Mammary epithelial cell (primary cell): ENCODE measurements at regions of chr2 and their contacts with region 1.

Region 1: DNA sequence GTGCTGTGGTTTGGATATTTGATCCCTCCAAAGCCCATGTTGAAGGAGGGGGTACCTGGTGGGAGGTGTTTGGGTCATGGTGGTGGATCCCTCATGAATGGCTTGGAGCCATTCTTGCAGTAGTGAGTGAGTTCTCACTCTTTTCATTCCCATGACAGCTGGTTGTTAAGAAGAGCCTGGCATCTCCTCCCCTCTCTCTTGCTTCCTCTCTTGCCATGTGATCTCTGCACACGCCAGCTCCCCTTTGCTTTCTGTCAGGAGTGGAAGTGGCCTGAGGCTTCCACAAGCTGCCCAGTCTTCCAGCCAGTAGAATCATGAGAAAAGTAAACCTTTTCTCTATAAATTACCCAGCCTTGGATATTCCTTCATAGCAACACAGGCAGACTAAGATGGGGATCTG is 8.6 kb downstream of the ADD2 start:
- DNase-seq: no peak
- H3K4me3 ChIP-seq: no peak overlapping the region
- H3K27ac ChIP-seq: no peak overlapping the region
- H3K4me1 ChIP-seq: no peaks in the 10 kb centered on the region
- H3K27me3 ChIP-seq: no peaks in the 10 kb centered on the region
- CTCF ChIP-seq: no peak

Region 2: DNA sequence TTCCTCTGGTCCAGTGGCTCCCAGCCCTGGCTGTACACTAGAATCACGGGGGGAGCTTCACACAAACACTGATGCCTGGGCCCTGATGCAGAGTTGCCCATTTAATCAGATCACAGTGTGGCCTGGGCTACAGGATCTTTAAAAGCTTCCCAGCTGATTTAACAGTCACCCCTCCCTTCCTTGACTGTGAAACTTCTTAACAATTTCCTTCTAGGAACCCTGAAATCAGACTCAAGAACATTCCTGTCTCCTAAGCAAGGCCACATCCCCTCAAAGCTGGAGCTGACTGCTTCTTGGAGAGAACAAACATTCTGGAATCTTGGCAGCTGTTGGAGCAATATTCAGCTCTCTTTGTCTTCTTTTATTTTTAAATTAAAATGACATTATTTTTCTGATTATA is 80.2 kb before region 1 on chr2:
- CTCF ChIA-PET with region 1: no interaction called
- dilution Hi-C with region 1: loop called (anchors 5 kb)
- in situ Hi-C with region 1: no loop called
- intact Hi-C with region 1: no loop called
- DNase-seq: no peak
- H3K4me3 ChIP-seq: no peak overlapping the region
- H3K27ac ChIP-seq: no peak overlapping the region
- H3K4me1 ChIP-seq: no peaks in the 10 kb centered on the region
- H3K27me3 ChIP-seq: no peaks in the 10 kb centered on the region
- CTCF ChIP-seq: no peak

Region 3: DNA sequence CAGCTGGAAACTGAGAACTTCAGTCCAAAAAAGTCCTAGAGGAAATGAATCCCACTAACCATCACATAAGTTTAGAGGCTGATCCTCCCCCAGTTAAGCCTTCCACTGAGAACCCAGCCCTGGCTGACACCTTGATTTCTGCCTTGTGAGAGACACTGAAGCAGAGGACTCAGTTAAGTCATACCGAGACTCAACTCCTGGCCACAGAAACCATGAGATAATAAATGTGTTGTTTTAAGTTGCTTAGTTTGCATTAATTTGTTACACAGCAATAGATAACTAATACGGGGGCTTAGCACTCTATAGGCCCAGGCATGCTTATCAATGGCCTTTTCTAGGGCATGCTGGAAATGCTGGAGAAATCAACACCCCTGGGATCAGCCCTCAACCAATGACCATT is 12.0 kb after region 1 on chr2:
- CTCF ChIA-PET with region 1: no interaction called
- dilution Hi-C with region 1: no loop called
- in situ Hi-C with region 1: no loop called
- intact Hi-C with region 1: no loop called
- DNase-seq: no peak
- H3K4me3 ChIP-seq: no peak overlapping the region
- H3K27ac ChIP-seq: no peak overlapping the region
- H3K4me1 ChIP-seq: peaks cover 7% of the 10 kb centered on the region
- H3K27me3 ChIP-seq: peaks cover 22% of the 10 kb centered on the region
- CTCF ChIP-seq: no peak

Region 4: DNA sequence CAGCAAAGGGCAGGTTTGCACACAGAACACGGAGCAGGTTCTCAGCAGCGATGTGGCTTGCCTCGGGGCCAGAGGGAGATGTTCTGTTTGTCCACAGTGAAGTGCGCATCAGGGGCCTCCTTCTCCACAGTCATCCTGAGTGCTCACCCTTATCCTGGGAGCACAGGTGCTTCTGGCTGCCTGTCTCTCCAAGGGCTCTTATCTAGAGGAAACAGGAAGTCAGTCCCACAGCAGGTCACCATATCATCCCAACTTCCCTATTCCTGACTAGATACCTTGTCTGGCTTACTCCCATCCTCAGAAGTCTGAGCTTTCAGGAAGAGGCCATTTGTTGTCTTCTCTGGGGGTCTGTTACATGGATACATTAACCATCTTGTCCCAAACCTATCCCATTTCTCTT is 76.2 kb after region 1 on chr2 and contains the start of gene CD207:
- CTCF ChIA-PET with region 1: interaction called, 13 read pairs
- dilution Hi-C with region 1: no loop called
- in situ Hi-C with region 1: no loop called
- intact Hi-C with region 1: no loop called
- DNase-seq: no peak
- H3K4me3 ChIP-seq: no peak within 1 kb of the TSS
- H3K27ac ChIP-seq: no peak within 1 kb of the TSS
- H3K4me1 ChIP-seq: no peaks in the 10 kb centered on the region
- H3K27me3 ChIP-seq: peaks cover 5% of the 10 kb centered on the region
- CTCF ChIP-seq: no peak
- total RNA-seq, gene CD207: not detected